ENCODE measurements at regions of chr11 and their contacts with region 1.

Region 1: DNA sequence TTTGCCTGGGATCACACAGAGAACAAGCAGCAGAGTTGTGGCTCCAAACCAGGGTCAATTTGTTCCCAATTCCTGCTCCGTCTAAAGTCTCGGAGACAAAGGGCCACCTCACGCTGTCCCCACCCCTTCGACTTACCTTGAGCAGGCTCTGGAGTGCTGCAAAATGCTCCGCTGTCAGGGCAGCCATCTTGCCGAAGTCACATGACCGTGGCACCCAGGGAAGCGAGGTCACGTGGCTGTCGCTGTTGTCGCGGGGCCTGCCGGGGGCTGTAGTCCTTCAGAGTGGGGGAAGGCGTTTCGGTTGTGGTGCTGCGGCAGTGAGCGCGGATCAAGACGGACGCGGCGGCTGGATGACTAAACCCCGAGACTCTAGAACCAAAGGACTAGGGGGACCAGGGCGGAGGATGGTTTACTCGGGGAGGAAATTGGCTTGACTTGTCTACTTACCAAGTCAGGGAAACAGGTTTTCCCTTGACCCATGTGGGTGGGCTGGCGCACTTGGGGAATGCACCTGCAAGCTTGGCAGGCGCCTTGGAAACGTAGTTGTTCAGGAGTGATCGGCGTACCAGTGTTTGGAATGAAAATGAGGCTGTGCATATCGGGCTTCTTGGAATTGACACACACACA is at the start of gene COMMD9:
- DNase-seq: peak; percentile 78 to 93 (median 91)
- ATAC-seq: peak; percentile 98
- H3K4me3 ChIP-seq: peak within 1 kb of the TSS; percentile 98
- H3K4me3 Mint-ChIP-seq: peak within 1 kb of the TSS; percentile 87 to 99 (median 94)
- H3K27ac ChIP-seq: peak within 1 kb of the TSS; percentile 58
- H3K27ac Mint-ChIP-seq: peak within 1 kb of the TSS; percentile 85 to 98 (median 90)
- H3K4me1 ChIP-seq: peaks cover 6 to 14% of the 10 kb centered on the region in 2 donors
- H3K4me1 Mint-ChIP-seq: peaks cover 24 to 55% (median 42%) of the 10 kb centered on the region in 7 donors
- H3K27me3 ChIP-seq: no peaks in the 10 kb centered on the region
- H3K27me3 Mint-ChIP-seq: no peaks in the 10 kb centered on the region
- total RNA-seq, gene COMMD9: 42.6 to 62.2 (median 45.9) TPM

Region 2: GRCh38 chr11:35662649-35663407 is 626.5 kb before region 1 on chr11 and contains the start of gene TRIM44:
- CTCF ChIA-PET with region 1: no interaction called
- POLR2A ChIA-PET with region 1: no interaction called
- intact Hi-C with region 1: loop called (anchors 1 to 2 kb)
- DNase-seq: peak; percentile 69 to 85 (median 82)
- ATAC-seq: peak; percentile 89
- H3K4me3 ChIP-seq: peak within 1 kb of the TSS; percentile 94
- H3K4me3 Mint-ChIP-seq: peak within 1 kb of the TSS; percentile 91 to 99 (median 95)
- H3K27ac ChIP-seq: peak within 1 kb of the TSS; percentile 94
- H3K27ac Mint-ChIP-seq: peak within 1 kb of the TSS; percentile 90 to 100 (median 96)
- H3K4me1 ChIP-seq: peaks cover 21 to 22% of the 10 kb centered on the region in 2 donors
- H3K4me1 Mint-ChIP-seq: peaks cover 24 to 61% (median 55%) of the 10 kb centered on the region in 7 donors
- H3K27me3 ChIP-seq: no peaks in the 10 kb centered on the region
- H3K27me3 Mint-ChIP-seq: peaks cover 0 to 22% (median 5%) of the 10 kb centered on the region in 5 donors
- total RNA-seq, gene TRIM44: 35.7 to 60.8 (median 58.6) TPM

Region 3: GRCh38 chr11:36376888-36377758 is 87.8 kb after region 1 on chr11:
- CTCF ChIA-PET with region 1: no interaction called
- POLR2A ChIA-PET with region 1: no interaction called
- intact Hi-C with region 1: loop called in 1 of 2 experiments (anchors 1 kb)
- DNase-seq: peak in 3 of 9 donors; percentile 12 to 76 (median 26)
- ATAC-seq: peak; percentile 81
- H3K4me3 ChIP-seq: peak overlapping the region; percentile 71
- H3K4me3 Mint-ChIP-seq: peak overlapping the region; percentile 52 to 98 (median 74)
- H3K27ac ChIP-seq: no peak overlapping the region
- H3K27ac Mint-ChIP-seq: peak overlapping the region in 2 of 9 donors; percentile 41 to 85
- H3K4me1 ChIP-seq: peaks cover 0 to 19% of the 10 kb centered on the region in 2 donors
- H3K4me1 Mint-ChIP-seq: peaks cover 6 to 49% (median 22%) of the 10 kb centered on the region in 7 donors
- H3K27me3 ChIP-seq: peaks cover 0 to 5% of the 10 kb centered on the region in 2 donors
- H3K27me3 Mint-ChIP-seq: peaks cover 37 to 67% (median 65%) of the 10 kb centered on the region in 5 donors

Region 4: DNA sequence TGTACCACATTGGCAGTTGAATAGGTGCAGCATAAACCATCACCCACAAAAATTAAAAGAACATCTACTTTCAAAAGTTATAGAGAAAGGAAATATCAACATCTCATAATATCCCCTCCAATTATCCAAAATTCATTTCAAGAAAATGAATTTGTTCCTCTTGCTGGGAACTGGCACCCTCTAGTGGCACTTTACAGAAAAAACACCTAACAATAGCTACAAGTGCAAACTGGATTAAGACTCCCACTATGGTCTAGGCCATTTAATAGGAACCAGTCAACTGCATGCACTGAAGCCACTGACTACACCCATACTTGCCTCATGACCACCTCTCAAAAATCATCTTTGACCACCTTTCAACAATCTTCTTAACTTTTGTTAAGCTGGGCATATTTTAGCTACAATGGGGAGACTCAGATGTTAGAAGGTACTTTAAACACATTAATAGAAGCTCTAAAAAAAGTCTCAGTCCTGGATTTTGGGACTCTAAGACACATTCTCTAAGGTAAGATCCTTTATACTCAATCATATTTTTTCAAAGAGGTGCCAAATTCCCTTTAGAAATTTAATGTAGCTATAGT is 203.5 kb after region 1 on chr11:
- CTCF ChIA-PET with region 1: interaction called, 4 read pairs
- POLR2A ChIA-PET with region 1: no interaction called
- intact Hi-C with region 1: loop called (anchors 1 kb)
- DNase-seq: peak in 7 of 9 donors; percentile 11 to 48 (median 36)
- ATAC-seq: peak; percentile 81
- H3K4me3 ChIP-seq: no peak overlapping the region
- H3K4me3 Mint-ChIP-seq: no peak overlapping the region
- H3K27ac ChIP-seq: no peak overlapping the region
- H3K27ac Mint-ChIP-seq: peak overlapping the region in 4 of 9 donors; percentile 7 to 53 (median 44)
- H3K4me1 ChIP-seq: peaks cover 0 to 8% of the 10 kb centered on the region in 2 donors
- H3K4me1 Mint-ChIP-seq: peaks cover 17 to 42% (median 28%) of the 10 kb centered on the region in 7 donors
- H3K27me3 ChIP-seq: no peaks in the 10 kb centered on the region
- H3K27me3 Mint-ChIP-seq: no peaks in the 10 kb centered on the region

Region 5: GRCh38 chr11:36541001-36541400 is 251.7 kb after region 1 on chr11:
- CTCF ChIA-PET with region 1: no interaction called
- POLR2A ChIA-PET with region 1: no interaction called
- intact Hi-C with region 1: loop called in 1 of 2 experiments (anchors 2 kb)
- DNase-seq: peak in 1 of 9 donors; percentile 32
- ATAC-seq: peak; percentile 67
- H3K4me3 ChIP-seq: no peak overlapping the region
- H3K4me3 Mint-ChIP-seq: no peak overlapping the region
- H3K27ac ChIP-seq: no peak overlapping the region
- H3K27ac Mint-ChIP-seq: no peak overlapping the region
- H3K4me1 ChIP-seq: no peaks in the 10 kb centered on the region
- H3K4me1 Mint-ChIP-seq: peaks cover 0 to 8% (median 0%) of the 10 kb centered on the region in 7 donors
- H3K27me3 ChIP-seq: no peaks in the 10 kb centered on the region
- H3K27me3 Mint-ChIP-seq: peaks cover 0 to 31% (median 22%) of the 10 kb centered on the region in 5 donors

Region 6: GRCh38 chr11:36672813-36673450 is 383.6 kb after region 1 on chr11:
- CTCF ChIA-PET with region 1: no interaction called
- POLR2A ChIA-PET with region 1: no interaction called
- intact Hi-C with region 1: loop called in 1 of 2 experiments (anchors 5 kb)
- DNase-seq: peak in 6 of 9 donors; percentile 8 to 43 (median 20)
- ATAC-seq: no peak
- H3K4me3 ChIP-seq: no peak overlapping the region
- H3K4me3 Mint-ChIP-seq: no peak overlapping the region
- H3K27ac ChIP-seq: no peak overlapping the region
- H3K27ac Mint-ChIP-seq: no peak overlapping the region
- H3K4me1 ChIP-seq: no peaks in the 10 kb centered on the region
- H3K4me1 Mint-ChIP-seq: no peaks in the 10 kb centered on the region
- H3K27me3 ChIP-seq: no peaks in the 10 kb centered on the region
- H3K27me3 Mint-ChIP-seq: peaks cover 0 to 33% (median 21%) of the 10 kb centered on the region in 5 donors

Measured in naive thymus-derived CD4-positive, alpha-beta T cell (primary cell).